ENCODE measurements at regions of chr17 and their contacts with region 1.

Region 1: DNA sequence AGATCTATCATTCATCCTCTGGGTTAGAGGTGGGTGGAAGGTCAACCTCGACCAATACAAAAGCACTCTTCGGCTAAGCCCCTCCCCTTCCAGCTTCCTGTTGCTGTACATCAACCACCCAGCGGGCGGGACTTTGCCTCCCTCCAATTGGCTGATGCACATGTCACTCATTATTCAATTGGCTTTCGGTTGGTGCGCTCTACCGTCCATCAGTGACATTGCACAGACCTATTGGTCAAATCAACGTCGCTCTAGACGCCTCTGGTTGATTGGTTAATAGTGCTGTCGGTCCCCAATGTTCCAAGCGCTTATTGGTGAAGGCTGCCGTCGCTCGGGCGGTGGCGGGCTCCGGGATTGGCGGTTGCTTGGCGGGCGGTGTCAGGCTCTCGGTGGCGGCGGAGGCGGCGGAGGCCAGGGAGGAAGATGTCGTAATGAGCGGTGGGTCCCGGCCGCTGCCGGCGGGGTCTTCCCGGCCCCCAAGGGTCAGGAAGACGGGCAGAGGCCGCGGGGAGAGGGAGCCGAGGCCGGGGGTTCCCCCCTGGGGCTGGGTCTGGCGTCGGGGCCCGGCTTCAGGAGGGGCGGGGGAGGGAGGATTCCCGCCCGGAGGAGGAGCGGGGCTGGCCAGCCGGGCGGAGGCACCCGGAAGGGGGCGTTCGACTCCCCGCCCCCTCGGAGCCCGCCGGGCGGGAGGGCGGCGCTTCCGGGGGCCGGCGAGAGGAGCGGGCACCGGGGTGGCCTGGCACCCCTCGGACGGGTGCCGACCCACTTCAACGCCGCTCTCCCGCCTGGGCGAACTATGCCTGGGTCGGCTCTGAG is at the start of gene SP2:
- DNase-seq: peak; percentile 100
- H3K4me3 Mint-ChIP-seq: peak within 1 kb of the TSS; percentile 93
- H3K27ac Mint-ChIP-seq: peak within 1 kb of the TSS; percentile 95
- H3K4me1 Mint-ChIP-seq: peaks cover 41% of the 10 kb centered on the region
- H3K27me3 Mint-ChIP-seq: no peaks in the 10 kb centered on the region
- total RNA-seq, gene SP2: 17.4 to 19.5 TPM

Region 2: DNA sequence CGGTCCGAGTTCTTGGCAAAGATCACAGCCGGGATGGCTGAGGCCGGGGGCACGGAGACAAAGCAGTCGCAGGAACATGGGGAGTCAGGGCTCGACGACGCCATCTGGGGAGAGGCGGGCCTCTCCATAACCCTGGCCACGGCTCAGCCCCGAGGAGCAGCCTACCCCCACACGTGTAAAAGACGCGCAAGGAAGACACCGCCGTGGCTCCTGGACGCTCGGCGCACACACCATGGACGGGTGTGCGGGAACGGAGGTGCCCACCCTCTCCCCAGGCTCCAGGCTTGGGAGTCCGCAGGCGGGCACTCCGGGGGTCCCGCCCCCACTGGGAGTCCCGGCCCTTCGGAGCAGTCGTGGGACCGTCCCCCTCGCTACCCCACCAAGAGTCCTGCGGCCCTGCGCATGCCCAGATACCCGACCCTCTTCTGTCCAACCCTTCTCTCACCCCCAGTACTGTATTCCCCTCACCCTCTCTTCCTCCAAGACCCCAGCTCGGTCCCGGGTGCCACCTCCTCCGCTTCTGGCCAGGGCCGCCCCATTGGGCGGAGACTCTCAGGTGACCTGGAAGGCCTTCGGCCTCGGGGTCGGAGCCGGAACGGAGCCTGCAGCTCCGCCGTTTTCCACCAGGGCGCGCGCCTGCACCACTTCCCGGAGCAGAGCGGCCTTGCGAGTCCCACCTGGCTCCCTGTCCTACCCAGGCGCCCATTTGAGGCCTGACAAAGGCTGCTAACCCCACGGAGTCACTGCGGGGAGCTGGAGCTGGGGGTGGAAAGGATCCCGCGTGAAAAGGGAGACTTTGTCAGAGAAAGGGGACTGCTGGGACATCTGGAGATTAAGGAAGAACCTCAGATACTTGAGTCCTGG is 55.1 kb before region 1 on chr17 and contains the start of gene SCRN2:
- CTCF ChIA-PET with region 1: interaction called, 460 read pairs
- intact Hi-C with region 1: no loop called
- DNase-seq: peak; percentile 93
- H3K4me3 Mint-ChIP-seq: peak within 1 kb of the TSS; percentile 100
- H3K27ac Mint-ChIP-seq: peak within 1 kb of the TSS; percentile 85
- H3K4me1 Mint-ChIP-seq: peaks cover 35% of the 10 kb centered on the region
- H3K27me3 Mint-ChIP-seq: peaks cover 13% of the 10 kb centered on the region
- total RNA-seq, gene SCRN2: 15.1 to 16.3 TPM

Region 3: GRCh38 chr17:47949136-47949759 is 53.2 kb after region 1 on chr17:
- CTCF ChIA-PET with region 1: interaction called, 9 read pairs
- intact Hi-C with region 1: loop called (anchors 1 kb)
- DNase-seq: peak; percentile 88
- H3K4me3 Mint-ChIP-seq: peak overlapping the region; percentile 49
- H3K27ac Mint-ChIP-seq: peak overlapping the region; percentile 67
- H3K4me1 Mint-ChIP-seq: peaks cover 41% of the 10 kb centered on the region
- H3K27me3 Mint-ChIP-seq: no peaks in the 10 kb centered on the region

Region 4: GRCh38 chr17:47978324-47978723 is 82.3 kb after region 1 on chr17:
- CTCF ChIA-PET with region 1: no interaction called
- intact Hi-C with region 1: no loop called
- DNase-seq: peak; percentile 60
- H3K4me3 Mint-ChIP-seq: no peak overlapping the region
- H3K27ac Mint-ChIP-seq: no peak overlapping the region
- H3K4me1 Mint-ChIP-seq: peaks cover 1% of the 10 kb centered on the region
- H3K27me3 Mint-ChIP-seq: no peaks in the 10 kb centered on the region

Region 5: DNA sequence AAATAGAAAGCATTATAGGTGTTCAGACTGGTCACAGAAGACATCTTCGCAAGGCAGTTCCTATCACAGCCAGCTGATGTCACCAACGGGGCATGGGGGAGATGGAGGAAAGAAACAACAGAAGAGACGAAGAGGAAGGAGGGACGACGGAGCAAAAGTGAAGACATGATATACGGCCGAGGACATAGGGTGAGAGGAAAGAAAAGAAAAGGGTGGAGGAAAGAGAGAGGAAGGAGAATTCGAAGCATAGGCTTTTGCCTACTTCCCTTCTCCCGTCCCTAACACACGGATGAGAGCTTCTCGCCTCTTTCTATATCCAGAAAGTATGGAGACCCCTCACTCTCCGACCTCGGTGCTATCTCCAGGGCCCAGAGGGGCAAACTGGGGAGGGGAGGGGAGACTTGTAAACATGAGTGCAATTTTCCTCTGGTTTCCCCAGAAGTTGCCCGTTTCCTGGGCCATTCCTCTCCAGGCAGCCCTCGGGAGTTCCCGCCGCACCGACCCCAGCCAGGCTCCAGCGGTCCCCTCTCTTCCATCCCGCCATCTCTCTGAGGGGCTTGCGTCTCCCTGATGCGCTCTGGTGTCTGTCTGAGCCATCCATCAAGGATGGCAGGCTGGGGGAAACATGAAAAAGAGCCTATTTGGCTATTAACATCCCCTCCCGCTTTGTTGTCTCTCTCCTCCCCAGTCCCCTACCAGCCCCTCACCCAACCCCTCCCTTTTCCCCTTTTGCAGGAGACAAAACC is 115.5 kb after region 1 on chr17:
- CTCF ChIA-PET with region 1: no interaction called
- intact Hi-C with region 1: loop called (anchors 5 kb)
- DNase-seq: peak; percentile 72
- H3K4me3 Mint-ChIP-seq: peak overlapping the region; percentile 70
- H3K27ac Mint-ChIP-seq: no peak overlapping the region
- H3K4me1 Mint-ChIP-seq: peaks cover 12% of the 10 kb centered on the region
- H3K27me3 Mint-ChIP-seq: peaks cover 50% of the 10 kb centered on the region

Region 6: DNA sequence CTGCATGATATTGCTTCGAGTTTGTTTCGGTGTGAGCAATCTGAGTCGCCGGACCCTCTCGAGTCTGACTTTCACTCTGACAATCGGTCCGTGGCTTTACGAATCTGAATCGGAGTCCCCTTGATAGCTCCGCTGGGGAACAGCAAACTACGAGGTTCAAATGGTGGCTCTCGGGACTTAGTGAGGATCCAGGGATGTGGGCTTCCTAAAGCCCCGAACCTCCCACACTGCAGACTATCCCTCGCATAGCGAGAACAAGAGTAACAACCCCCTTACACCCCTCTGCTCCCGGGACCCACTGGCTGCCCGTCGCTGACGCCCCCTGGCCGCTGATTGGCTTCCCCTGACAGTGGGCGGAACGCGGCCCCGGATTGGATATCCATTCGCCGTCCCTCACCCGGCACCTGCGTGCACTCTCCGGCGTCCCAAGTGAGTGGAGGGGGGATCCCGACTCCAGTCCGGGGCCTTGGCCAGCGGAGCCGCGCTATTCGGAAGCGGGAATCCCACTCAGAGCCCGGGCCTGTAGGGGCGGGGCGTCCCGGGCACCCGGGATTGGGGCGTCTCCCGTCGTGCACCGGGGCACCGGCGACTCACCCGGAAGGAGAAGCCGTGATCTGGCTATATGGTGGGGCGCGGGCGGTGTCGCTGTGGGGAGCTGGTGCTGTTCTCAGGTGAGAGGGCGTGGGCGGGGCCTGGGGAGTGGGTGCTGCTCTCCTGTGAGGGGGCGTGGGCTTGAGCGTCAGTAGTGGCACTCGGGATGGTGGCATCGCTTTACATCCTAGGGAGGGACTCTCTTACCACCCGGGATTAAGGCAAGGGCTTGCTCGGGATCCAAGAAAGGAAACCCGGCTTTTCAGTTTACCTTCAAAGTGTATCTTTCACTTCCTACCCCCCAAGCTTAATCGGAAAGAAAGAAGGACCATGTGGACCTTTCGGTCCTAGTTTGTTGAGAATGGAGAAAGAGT is 211.4 kb after region 1 on chr17 and contains the start of gene SNX11:
- CTCF ChIA-PET with region 1: no interaction called
- intact Hi-C with region 1: loop called (anchors 2 kb)
- DNase-seq: peak; percentile 96
- H3K4me3 Mint-ChIP-seq: peak within 1 kb of the TSS; percentile 97
- H3K27ac Mint-ChIP-seq: peak within 1 kb of the TSS; percentile 93
- H3K4me1 Mint-ChIP-seq: peaks cover 56% of the 10 kb centered on the region
- H3K27me3 Mint-ChIP-seq: no peaks in the 10 kb centered on the region
- total RNA-seq, gene SNX11: 20.2 to 23.0 TPM

Measured in activated naive CD4-positive, alpha-beta T cell treated with anti-CD3 and anti-CD28 coated beads for 36 hours (primary cell).